HEK293 (cell line): ENCODE measurements at regions of chr18 and their contacts with region 1.

Region 1: GRCh38 chr18:44679056-44679905 is 1.4 kb upstream of the SETBP1 start:
- H3K4me3 ChIP-seq: peak overlapping the region; percentile 74
- H3K27ac ChIP-seq: peak overlapping the region; percentile 98
- H3K4me1 ChIP-seq: peaks cover 22% of the 10 kb centered on the region
- CTCF ChIP-seq: peak; percentile 77

Region 2: DNA sequence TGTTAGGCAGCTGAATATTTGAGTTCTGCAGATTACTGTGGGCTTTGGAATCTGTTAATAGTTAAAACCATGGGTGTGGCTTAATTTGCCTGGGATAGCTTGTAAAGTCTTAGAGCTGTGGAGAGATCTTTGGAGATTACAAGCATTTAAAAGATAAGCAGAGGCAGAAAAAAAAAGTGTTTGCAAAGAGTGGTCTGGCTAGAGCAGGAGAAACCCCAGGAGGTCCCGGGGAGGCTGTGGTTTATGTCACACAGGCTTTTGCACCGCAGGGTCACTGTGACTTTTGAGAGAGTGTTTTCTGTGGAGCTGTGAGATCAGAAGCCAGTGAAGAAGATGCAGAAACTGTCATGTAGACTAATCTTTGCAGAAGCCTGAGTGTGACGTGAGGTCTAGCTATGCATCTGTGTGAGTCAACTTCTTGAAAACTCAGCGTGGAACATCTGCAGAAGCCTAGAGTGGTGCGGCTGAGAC is 50.4 kb after region 1 on chr18:
- CTCF ChIA-PET with region 1: interaction called, 3 read pairs
- POLR2A ChIA-PET with region 1: interaction called, 11 read pairs
- H3K4me3 ChIP-seq: no peak overlapping the region
- H3K27ac ChIP-seq: peak overlapping the region; percentile 30; the same call in 1 of the 2 replicates
- H3K4me1 ChIP-seq: peaks cover 39% of the 10 kb centered on the region
- CTCF ChIP-seq: no peak

Region 3: DNA sequence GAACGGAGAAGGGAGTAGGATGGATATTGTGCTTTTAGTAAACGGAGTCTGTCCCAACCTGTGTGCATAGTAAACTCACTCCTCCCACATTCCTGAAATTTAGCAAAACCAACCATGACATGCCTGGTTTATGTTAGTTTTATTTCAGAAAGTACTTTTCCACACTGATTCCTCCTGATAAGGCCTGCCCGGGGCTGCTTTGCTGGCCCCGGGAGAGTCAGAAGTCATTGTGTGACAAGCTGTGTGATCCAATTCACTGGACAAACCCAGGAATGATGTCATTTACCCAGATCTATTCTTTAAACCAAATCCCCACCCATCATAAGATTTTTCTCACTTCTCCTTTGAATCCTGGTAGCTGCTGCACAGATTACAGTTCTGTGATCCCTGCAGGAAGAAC is 110.4 kb after region 1 on chr18:
- CTCF ChIA-PET with region 1: no interaction called
- POLR2A ChIA-PET with region 1: interaction called, 12 read pairs
- H3K4me3 ChIP-seq: no peak overlapping the region
- H3K27ac ChIP-seq: peak overlapping the region; percentile 43
- H3K4me1 ChIP-seq: peaks cover 29% of the 10 kb centered on the region
- CTCF ChIP-seq: no peak